ENCODE measurements at regions of chr1 and their contacts with region 1.

Region 1: DNA sequence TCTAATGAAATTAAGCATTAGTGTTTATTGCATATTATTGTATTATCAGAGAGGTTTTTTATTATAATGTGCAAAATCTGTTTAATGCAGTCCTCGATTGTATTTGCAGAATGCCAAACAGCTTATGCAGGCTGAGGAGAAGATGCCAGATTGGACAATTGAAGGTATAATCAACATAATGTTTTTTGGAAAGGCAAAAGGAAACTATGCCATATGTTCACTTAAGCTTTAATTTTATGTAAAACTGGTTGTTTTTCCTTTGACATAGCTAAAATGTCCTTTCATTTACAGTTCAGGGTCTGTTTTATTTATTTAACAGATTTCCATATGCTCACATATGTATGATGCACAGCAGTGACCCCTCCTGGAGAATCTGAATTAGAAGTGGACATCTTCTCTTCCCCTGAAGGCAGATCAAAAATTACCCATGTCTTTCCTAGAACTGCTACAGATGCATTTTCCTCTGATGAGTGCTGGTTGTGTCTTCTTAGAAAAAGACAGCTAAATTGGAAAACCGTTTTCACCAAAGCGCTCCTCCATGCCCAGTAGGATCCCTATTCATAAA is 143.5 kb upstream of the USH2A start:
- DNase-seq: no peak
- H3K4me3 ChIP-seq: no peak overlapping the region
- H3K27ac ChIP-seq: no peak overlapping the region
- H3K27me3 ChIP-seq: no peaks in the 10 kb centered on the region
- CTCF ChIP-seq: peak; percentile 60

Region 2: DNA sequence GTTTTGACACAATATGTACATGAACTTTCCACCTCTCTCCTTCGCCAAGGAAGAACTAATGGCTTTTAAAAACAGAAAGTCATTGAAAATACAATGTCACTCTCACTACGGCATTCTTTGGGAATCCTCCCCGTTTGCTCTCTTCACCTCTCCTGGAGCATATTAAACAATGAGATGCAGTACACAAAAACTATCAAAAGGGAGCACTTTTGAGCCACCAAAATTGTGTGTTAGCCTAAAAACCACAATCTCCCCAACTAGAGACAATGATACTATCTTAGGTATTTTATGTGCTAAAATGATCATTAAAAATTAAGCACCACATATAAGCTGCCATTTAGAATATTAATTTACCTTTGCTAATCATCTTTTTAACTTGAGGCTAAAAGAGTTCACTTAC is 574.1 kb before region 1 on chr1:
- CTCF ChIA-PET with region 1: interaction called, 20 read pairs
- POLR2A ChIA-PET with region 1: no interaction called
- DNase-seq: no peak
- H3K4me3 ChIP-seq: no peak overlapping the region
- H3K27ac ChIP-seq: no peak overlapping the region
- H3K27me3 ChIP-seq: no peaks in the 10 kb centered on the region
- CTCF ChIP-seq: peak; percentile 62

Region 3: GRCh38 chr1:216111842-216112241 is 454.9 kb before region 1 on chr1:
- CTCF ChIA-PET with region 1: interaction called, 12 read pairs
- POLR2A ChIA-PET with region 1: no interaction called
- DNase-seq: no peak
- H3K4me3 ChIP-seq: no peak overlapping the region
- H3K27ac ChIP-seq: no peak overlapping the region
- H3K27me3 ChIP-seq: no peaks in the 10 kb centered on the region
- CTCF ChIP-seq: peak; percentile 52

Region 4: DNA sequence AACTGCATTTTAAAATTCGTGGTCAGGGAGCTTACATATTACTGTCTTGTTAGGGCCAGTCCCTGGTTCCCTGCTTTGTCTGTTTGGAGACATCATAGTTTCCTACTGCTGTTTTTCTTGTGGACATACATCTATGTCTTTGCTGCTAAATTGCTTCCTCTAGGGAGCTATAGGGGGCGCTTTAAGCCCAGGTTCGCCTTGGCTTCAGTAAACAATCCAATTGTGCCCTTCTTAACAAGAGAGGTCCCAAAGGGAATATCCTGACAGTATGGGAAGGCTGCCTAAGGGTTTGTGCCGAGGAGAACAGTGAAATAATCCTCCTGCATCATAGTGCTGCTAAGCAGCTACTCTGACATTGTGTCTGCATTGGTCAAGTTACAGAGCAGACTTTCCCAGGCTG is 255.9 kb before region 1 on chr1:
- CTCF ChIA-PET with region 1: interaction called, 14 read pairs
- POLR2A ChIA-PET with region 1: no interaction called
- DNase-seq: peak; percentile 10
- H3K4me3 ChIP-seq: no peak overlapping the region
- H3K27ac ChIP-seq: no peak overlapping the region
- H3K27me3 ChIP-seq: no peaks in the 10 kb centered on the region
- CTCF ChIP-seq: peak; percentile 69

Region 5: GRCh38 chr1:216531263-216532239 is 35.2 kb before region 1 on chr1:
- CTCF ChIA-PET with region 1: no interaction called
- POLR2A ChIA-PET with region 1: no interaction called
- DNase-seq: no peak
- H3K4me3 ChIP-seq: peak overlapping the region; percentile 47
- H3K27ac ChIP-seq: no peak overlapping the region
- H3K27me3 ChIP-seq: no peaks in the 10 kb centered on the region
- CTCF ChIP-seq: no peak

Region 6: DNA sequence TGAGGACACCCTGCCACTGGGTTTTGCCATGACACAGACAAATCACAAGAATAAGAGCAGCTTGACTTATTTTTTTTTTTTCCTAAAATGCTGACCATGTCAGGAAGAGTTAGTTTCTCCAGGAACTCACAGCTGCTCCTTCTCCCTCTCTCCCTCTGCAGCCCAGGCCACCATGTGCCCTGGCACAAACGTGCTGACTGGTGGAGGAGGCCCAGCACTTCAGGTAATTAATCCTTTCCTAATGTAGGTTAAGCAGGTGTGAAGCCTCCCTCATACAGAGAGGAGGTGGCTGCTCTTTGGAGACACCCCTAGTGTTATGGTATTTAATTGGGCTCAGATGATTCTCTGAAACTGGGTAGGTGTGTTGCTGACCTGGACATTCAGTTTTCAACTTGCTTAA is 13.7 kb before region 1 on chr1:
- CTCF ChIA-PET with region 1: interaction called, 15 read pairs
- POLR2A ChIA-PET with region 1: no interaction called
- DNase-seq: no peak
- H3K4me3 ChIP-seq: no peak overlapping the region
- H3K27ac ChIP-seq: no peak overlapping the region
- H3K27me3 ChIP-seq: no peaks in the 10 kb centered on the region
- CTCF ChIP-seq: no peak

Region 7: GRCh38 chr1:216580538-216581057 is 13.9 kb after region 1 on chr1:
- CTCF ChIA-PET with region 1: interaction called, 12 read pairs
- POLR2A ChIA-PET with region 1: no interaction called
- DNase-seq: no peak
- H3K4me3 ChIP-seq: no peak overlapping the region
- H3K27ac ChIP-seq: no peak overlapping the region
- H3K27me3 ChIP-seq: no peaks in the 10 kb centered on the region
- CTCF ChIP-seq: no peak

Measured in AG04450 (cell line).